ENCODE measurements at regions of chr16 and their contacts with region 1.

Region 1: DNA sequence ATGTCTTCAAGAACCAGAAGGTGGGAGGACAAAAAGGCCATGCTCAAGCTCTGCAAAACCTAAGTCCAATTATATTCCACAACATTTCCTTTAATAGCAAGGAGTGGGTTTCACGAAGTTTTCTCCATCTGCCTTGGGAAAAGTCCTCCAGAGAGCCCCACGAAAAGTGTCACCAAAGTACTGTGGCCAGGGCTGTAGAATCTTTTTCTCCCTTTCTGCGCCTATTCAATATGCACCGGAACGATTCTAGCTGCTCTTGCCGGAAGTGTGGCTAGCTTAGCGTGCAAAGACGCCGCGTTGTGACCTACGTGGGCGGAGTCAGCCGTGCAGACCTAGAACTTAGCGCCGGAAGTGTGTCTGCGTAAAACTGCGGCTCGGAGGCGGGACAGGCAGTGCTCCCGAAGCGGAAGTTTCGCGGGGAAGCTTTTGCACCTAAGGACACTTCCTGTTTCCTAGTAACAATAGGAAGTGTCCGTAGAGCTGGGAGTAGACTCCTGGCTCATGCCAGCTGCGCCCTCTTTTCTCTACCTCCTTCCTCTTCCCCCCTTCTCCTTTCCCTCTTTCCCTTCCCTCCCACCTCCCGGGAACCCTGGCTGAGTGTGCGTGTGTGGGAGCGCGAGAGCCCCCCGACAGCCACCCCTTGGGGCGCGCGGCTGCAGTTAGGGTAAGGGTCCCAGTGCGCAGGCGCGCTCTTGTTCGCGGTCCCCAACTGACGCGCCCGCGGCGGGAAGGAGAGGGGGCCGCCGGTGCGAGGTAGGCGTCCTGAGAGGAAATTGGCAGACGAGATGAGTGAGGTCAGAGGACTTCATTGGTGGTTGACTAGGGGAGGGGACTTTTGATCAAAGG is at the starts of genes ZNF646 and ZNF668:
- DNase-seq: peak; percentile 97 to 99
- ATAC-seq: peak; percentile 93 to 99 (median 96)
- H3K4me3 ChIP-seq: peak within 1 kb of the TSS; percentile 74 to 99 (median 84)
- H3K27ac ChIP-seq: peak within 1 kb of the TSS; percentile 87 to 99 (median 96)
- H3K4me1 ChIP-seq: peaks cover 2 to 33% (median 27%) of the 10 kb centered on the region in 9 donors
- H3K27me3 ChIP-seq: no peaks in the 10 kb centered on the region
- CTCF ChIP-seq: no peak
- total RNA-seq, gene ZNF646: 7.5 to 12.0 (median 8.7) TPM
- total RNA-seq, gene ZNF668: 3.6 to 8.2 (median 4.5) TPM

Region 2: GRCh38 chr16:30628627-30629540 is 445.3 kb before region 1 on chr16:
- intact Hi-C with region 1: no loop called
- DNase-seq: peak; percentile 88 to 89
- ATAC-seq: peak; percentile 74 to 93 (median 87)
- H3K4me3 ChIP-seq: peak overlapping the region in 8 of 10 donors; percentile 13 to 44 (median 22)
- H3K27ac ChIP-seq: peak overlapping the region in 7 of 10 donors; percentile 18 to 74 (median 59)
- H3K4me1 ChIP-seq: peaks cover 0 to 13% (median 0%) of the 10 kb centered on the region in 9 donors
- H3K27me3 ChIP-seq: no peaks in the 10 kb centered on the region
- CTCF ChIP-seq: peak; percentile 82 to 93 (median 90)

Region 3: GRCh38 chr16:30997000-30997886 is 76.9 kb before region 1 on chr16:
- intact Hi-C with region 1: loop called in 1 of 10 experiments (anchors 5 kb)
- DNase-seq: peak; percentile 74 to 90
- ATAC-seq: peak; percentile 93 to 95 (median 94)
- H3K4me3 ChIP-seq: peak overlapping the region; percentile 38 to 64 (median 60)
- H3K27ac ChIP-seq: peak overlapping the region in 9 of 10 donors; percentile 39 to 88 (median 55)
- H3K4me1 ChIP-seq: peaks cover 4 to 34% (median 16%) of the 10 kb centered on the region in 9 donors
- H3K27me3 ChIP-seq: no peaks in the 10 kb centered on the region
- CTCF ChIP-seq: no peak

Region 4: DNA sequence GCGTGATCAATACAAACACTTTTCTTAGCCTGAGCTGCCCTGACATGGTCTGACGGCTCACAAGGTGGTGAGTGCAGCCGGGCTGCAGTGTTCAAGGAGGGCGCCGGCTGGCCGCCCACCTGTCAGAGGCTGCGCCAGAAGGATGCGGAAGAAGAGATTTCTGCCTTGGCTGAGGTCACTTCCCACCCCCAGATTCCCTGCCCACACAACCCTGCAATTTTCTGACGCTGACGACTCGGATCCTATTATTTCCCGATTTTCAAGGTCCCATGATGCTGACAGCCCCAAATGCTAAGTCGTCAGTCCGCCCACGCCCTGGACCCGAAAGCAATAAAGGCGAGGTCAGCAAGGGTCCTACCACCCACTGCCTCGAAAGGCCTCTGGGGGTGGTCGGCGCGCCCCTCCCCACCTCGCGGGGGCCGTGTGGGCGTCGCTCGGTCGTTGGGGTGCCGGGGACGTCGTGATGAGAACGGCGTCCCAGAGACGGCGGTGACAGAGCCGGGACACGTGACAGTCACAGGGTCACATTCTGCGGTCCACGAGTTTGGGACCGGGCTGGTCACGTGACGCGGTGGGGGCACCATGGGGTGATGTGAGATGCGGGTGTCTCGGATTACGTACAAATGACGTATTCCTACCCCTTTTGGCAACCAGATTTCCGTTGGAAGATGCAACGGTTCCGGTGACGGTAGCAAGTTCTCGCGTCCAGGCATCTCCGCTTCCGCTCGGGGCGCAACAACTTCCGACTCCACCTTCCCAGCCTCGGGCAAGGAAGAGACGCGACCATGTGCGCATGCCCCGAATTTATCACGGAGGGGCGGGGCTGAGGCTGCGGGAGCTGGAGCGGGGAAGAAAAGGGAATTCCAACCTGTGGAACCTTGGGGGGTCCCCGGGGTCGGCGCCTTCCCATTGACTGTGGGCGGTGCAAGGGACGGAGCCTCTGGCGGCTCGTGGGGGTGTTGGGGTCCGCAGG is 41.2 kb before region 1 on chr16 and contains the start of gene STX4:
- intact Hi-C with region 1: loop called in 9 of 10 experiments (anchors 1 to 5 kb)
- DNase-seq: peak; percentile 98 to 99
- ATAC-seq: peak; percentile 92 to 98 (median 96)
- H3K4me3 ChIP-seq: peak within 1 kb of the TSS; percentile 74 to 96 (median 90)
- H3K27ac ChIP-seq: peak within 1 kb of the TSS; percentile 90 to 99 (median 96)
- H3K4me1 ChIP-seq: peaks cover 0 to 40% (median 20%) of the 10 kb centered on the region in 9 donors
- H3K27me3 ChIP-seq: no peaks in the 10 kb centered on the region
- CTCF ChIP-seq: peak in 1 of 9 donors; percentile 13
- total RNA-seq, gene STX4: 31.8 to 53.8 (median 38.6) TPM

Region 5: DNA sequence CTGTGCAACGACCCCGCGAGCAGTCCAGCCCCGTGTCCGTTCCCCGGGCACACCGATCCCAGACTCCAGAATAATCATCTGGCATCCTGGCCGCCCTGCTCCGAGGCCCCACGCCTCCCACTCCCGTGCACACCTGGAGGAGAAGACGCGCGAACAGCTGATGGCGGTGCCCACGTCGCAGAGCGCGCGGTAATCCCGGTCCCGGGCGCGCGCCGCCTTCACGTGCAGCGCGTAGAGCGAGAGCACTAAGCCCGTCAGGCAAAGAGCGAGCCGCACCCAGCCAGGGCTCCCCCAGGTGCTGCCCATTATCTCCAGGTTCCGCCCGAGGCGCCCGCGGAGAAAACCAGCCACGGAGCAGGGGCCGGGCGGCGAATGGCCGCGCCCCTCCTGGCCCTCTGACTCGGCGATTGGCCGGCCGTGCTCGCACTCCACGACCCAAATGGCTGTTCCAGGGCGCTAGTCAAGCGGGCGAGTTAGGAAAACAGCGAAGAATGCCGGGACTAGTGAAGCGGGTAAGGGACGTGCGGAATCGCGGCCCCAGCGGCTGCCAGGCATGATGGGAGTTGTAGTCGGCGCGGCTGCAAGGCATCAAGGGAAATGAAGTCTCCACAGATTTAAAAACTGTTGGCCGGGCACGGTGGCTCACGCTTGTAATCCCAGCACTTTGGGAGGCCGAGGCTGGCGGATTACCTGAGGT is 20.4 kb after region 1 on chr16 and contains the start of gene VKORC1:
- intact Hi-C with region 1: loop called in 1 of 10 experiments (anchors 1 kb)
- DNase-seq: peak; percentile 93 to 96
- ATAC-seq: peak; percentile 95 to 98 (median 96)
- H3K4me3 ChIP-seq: peak within 1 kb of the TSS; percentile 76 to 98 (median 88)
- H3K27ac ChIP-seq: peak within 1 kb of the TSS; percentile 51 to 93 (median 86)
- H3K4me1 ChIP-seq: peaks cover 0 to 30% (median 20%) of the 10 kb centered on the region in 9 donors
- H3K27me3 ChIP-seq: no peaks in the 10 kb centered on the region
- CTCF ChIP-seq: peak in 1 of 9 donors; percentile 12
- total RNA-seq, gene VKORC1: 27.0 to 68.1 (median 31.8) TPM

Region 6: DNA sequence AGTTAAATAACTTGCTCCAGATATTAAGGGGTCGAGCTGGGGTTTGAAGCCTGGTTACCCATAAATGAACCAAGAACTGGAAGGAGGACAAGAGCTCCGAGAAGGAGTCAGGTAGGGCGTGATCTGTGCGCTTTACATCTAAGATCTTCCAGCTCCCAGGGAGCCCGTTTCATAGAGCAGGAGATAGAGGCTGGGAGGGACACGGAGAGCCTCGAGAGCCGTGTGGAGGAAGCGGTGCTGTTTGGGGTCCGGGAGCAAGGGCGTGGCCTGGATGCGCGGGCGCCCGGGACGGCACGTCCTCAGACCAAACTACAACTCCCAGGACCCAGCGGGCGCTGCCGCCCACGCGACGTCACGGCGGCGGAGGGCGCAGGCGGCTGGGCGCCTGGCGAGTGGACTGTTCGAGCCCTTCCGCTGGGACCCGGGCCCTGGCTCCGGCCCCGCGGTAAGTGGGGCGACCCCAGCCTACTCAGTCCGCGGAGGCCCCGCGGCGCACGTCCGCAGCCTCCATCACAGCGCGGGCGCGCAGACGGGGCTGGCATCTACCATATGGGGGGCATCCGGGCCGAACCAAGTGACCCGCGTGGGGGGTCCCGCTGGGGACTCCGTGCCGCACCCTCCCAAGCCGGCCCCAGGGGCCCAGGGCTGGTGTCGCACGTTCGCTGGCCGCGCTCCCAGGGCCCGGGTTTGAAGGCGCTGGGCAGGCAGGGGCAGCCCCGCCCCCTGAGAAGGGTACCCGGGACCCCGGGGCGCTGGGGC is 34.0 kb after region 1 on chr16 and contains the start of gene BCKDK:
- intact Hi-C with region 1: loop called in 1 of 10 experiments (anchors 5 kb)
- DNase-seq: peak; percentile 70 to 85
- ATAC-seq: peak; percentile 72 to 91 (median 82)
- H3K4me3 ChIP-seq: peak within 1 kb of the TSS; percentile 81 to 100 (median 98)
- H3K27ac ChIP-seq: peak within 1 kb of the TSS; percentile 85 to 99 (median 96)
- H3K4me1 ChIP-seq: peaks cover 15 to 47% (median 29%) of the 10 kb centered on the region in 9 donors
- H3K27me3 ChIP-seq: no peaks in the 10 kb centered on the region
- CTCF ChIP-seq: no peak
- total RNA-seq, gene BCKDK: 62.8 to 90.9 (median 74.7) TPM

Region 7: GRCh38 chr16:31179747-31180459 is 105.7 kb after region 1 on chr16 and contains the start of gene FUS:
- intact Hi-C with region 1: loop called in 1 of 10 experiments (anchors 10 kb)
- DNase-seq: peak; percentile 90 to 92
- ATAC-seq: peak; percentile 84 to 93 (median 90)
- H3K4me3 ChIP-seq: peak within 1 kb of the TSS; percentile 71 to 94 (median 83)
- H3K27ac ChIP-seq: peak within 1 kb of the TSS; percentile 89 to 99 (median 94)
- H3K4me1 ChIP-seq: peaks cover 10 to 57% (median 42%) of the 10 kb centered on the region in 9 donors
- H3K27me3 ChIP-seq: no peaks in the 10 kb centered on the region
- CTCF ChIP-seq: no peak
- total RNA-seq, gene FUS: 127 to 174 (median 140) TPM

Measured in heart right ventricle (tissue), 16 donors.